PC-3 (cell line): ENCODE measurements at regions of chrX and their contacts with region 1.

Region 1: GRCh38 chrX:101595739-101596419 is 21.9 kb downstream of the ARMCX6 start:
- DNase-seq: peak; percentile 70
- ATAC-seq: peak; percentile 96
- H3K4me3 ChIP-seq: no peak overlapping the region
- H3K27ac ChIP-seq: no peak overlapping the region
- H3K4me1 ChIP-seq: no peaks in the 10 kb centered on the region
- H3K27me3 ChIP-seq: 0 out of 2 replicates have a peak, but pooled peaks cover 4% of the 10 kb centered on the region
- CTCF ChIP-seq: peak; percentile 81

Region 2: DNA sequence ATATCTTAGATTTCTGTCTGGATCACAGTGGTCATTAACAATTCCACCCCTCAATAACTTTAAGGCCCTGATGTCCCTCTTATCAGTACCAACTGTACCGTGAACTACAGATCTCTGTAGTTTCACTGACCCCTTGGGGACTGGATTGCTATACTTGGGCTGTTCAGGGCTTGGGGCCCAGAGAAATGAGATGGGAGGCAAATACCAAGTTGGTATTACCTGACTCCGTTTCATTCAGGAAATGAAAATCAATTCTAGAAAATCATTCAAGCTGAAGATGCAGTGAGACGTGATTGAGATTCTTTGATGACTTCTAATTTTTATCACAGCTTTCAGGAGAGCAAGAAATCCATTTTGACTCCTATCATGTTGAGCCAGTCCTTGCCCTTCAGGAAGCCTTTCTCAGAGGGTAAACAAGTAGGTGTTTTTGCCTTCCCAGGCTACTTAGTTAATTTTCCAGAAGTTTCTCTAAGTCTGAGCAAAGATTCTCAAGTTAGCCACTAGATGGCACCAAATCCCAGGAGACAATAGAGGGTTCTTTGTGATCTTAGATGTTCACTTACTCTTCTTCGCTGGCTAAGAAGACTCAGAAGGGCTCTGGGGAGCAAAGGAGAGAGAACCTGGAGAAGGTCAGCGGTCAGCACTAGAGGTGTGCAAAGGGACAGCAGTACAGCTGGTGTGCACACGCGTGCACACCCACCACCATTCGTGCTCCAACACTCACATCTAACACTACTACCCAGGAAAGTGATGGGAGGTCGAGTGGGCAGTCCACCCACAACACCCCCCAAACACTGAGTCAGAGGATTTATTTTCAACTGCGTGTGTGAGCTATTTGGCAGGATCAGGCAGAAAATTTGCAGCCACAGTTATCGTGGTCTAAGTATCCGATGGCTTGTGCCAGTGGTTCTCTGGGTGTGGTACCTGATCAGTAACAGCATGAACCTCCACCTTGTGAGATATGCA is 180.4 kb before region 1 on chrX:
- CTCF ChIA-PET with region 1: no interaction called
- POLR2A ChIA-PET with region 1: no interaction called
- intact Hi-C with region 1: loop called (anchors 5 kb)
- DNase-seq: peak; percentile 69
- ATAC-seq: peak; percentile 71
- H3K4me3 ChIP-seq: no peak overlapping the region
- H3K27ac ChIP-seq: no peak overlapping the region
- H3K4me1 ChIP-seq: peaks cover 5% of the 10 kb centered on the region; the same call in 1 of the 2 replicates
- H3K27me3 ChIP-seq: no peaks in the 10 kb centered on the region
- CTCF ChIP-seq: peak; percentile 75

Region 3: GRCh38 chrX:101539116-101539515 is 56.8 kb before region 1 on chrX:
- CTCF ChIA-PET with region 1: no interaction called
- POLR2A ChIA-PET with region 1: no interaction called
- intact Hi-C with region 1: no loop called
- DNase-seq: no peak
- ATAC-seq: no peak
- H3K4me3 ChIP-seq: no peak overlapping the region
- H3K27ac ChIP-seq: no peak overlapping the region
- H3K4me1 ChIP-seq: no peaks in the 10 kb centered on the region
- H3K27me3 ChIP-seq: no peaks in the 10 kb centered on the region
- CTCF ChIP-seq: no peak

Region 4: GRCh38 chrX:101759000-101759399 is 163.1 kb after region 1 on chrX:
- CTCF ChIA-PET with region 1: no interaction called
- POLR2A ChIA-PET with region 1: no interaction called
- intact Hi-C with region 1: loop called (anchors 5 kb)
- DNase-seq: peak; percentile 65
- ATAC-seq: peak; percentile 83
- H3K4me3 ChIP-seq: no peak overlapping the region
- H3K27ac ChIP-seq: no peak overlapping the region
- H3K4me1 ChIP-seq: no peaks in the 10 kb centered on the region
- H3K27me3 ChIP-seq: no peaks in the 10 kb centered on the region
- CTCF ChIP-seq: peak; percentile 60